ENCODE measurements at regions of chr19 and their contacts with region 1.

Region 1: GRCh38 chr19:55605207-55605636 is 225 bp upstream of the ZNF865 start:
- DNase-seq: peak; percentile 100
- ATAC-seq: peak; percentile 87
- H3K4me3 Mint-ChIP-seq: peak overlapping the region; percentile 88
- H3K27ac Mint-ChIP-seq: peak overlapping the region; percentile 96
- H3K4me1 Mint-ChIP-seq: peaks cover 57% of the 10 kb centered on the region
- H3K27me3 Mint-ChIP-seq: no peaks in the 10 kb centered on the region

Region 2: GRCh38 chr19:55385740-55386529 is 219.3 kb before region 1 on chr19 and contains the start of gene RPL28:
- CTCF ChIA-PET with region 1: no interaction called
- POLR2A ChIA-PET with region 1: no interaction called
- intact Hi-C with region 1: loop called in 1 of 2 experiments (anchors 1 kb)
- DNase-seq: peak; percentile 98
- ATAC-seq: peak; percentile 85
- H3K4me3 Mint-ChIP-seq: peak within 1 kb of the TSS; percentile 89
- H3K27ac Mint-ChIP-seq: peak within 1 kb of the TSS; percentile 98
- H3K4me1 Mint-ChIP-seq: peaks cover 51% of the 10 kb centered on the region
- H3K27me3 Mint-ChIP-seq: no peaks in the 10 kb centered on the region
- total RNA-seq, gene RPL28: 2,751 to 4,078 TPM

Region 3: GRCh38 chr19:55516878-55517620 is 88.2 kb before region 1 on chr19:
- CTCF ChIA-PET with region 1: interaction called, 13 read pairs
- POLR2A ChIA-PET with region 1: no interaction called
- intact Hi-C with region 1: loop called (anchors 1 kb)
- DNase-seq: peak; percentile 96
- ATAC-seq: peak; percentile 100
- H3K4me3 Mint-ChIP-seq: peak overlapping the region; percentile 54
- H3K27ac Mint-ChIP-seq: peak overlapping the region; percentile 9
- H3K4me1 Mint-ChIP-seq: peaks cover 3% of the 10 kb centered on the region
- H3K27me3 Mint-ChIP-seq: no peaks in the 10 kb centered on the region

Region 4: GRCh38 chr19:55586976-55587668 is 18.1 kb before region 1 on chr19:
- CTCF ChIA-PET with region 1: interaction called, 6 read pairs
- POLR2A ChIA-PET with region 1: no interaction called
- intact Hi-C with region 1: loop called in 1 of 2 experiments (anchors 1 kb)
- DNase-seq: peak; percentile 97
- ATAC-seq: peak; percentile 99
- H3K4me3 Mint-ChIP-seq: peak overlapping the region; percentile 71
- H3K27ac Mint-ChIP-seq: peak overlapping the region; percentile 37
- H3K4me1 Mint-ChIP-seq: peaks cover 20% of the 10 kb centered on the region
- H3K27me3 Mint-ChIP-seq: no peaks in the 10 kb centered on the region

Region 5: DNA sequence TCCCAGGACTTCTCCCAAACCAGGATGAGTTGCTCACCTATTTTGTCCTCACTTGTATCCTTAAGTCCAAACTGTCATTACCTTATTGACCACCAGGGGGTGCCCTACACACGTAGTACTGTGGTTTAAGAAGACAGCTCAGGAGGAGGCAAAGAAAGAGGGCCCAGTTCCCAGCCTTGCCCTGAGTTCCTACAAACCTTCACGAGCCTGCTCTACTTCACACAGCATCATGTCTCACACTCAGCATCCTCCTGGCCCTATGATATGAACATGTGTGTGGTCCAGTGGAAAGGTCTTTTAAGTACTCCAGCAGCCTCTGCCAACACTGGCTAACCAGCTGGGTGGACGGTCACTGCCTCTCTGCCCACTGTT is 27.2 kb after region 1 on chr19:
- CTCF ChIA-PET with region 1: interaction called, 33 read pairs
- POLR2A ChIA-PET with region 1: no interaction called
- intact Hi-C with region 1: no loop called
- DNase-seq: peak; percentile 93
- ATAC-seq: peak; percentile 43
- H3K4me3 Mint-ChIP-seq: peak overlapping the region; percentile 30
- H3K27ac Mint-ChIP-seq: peak overlapping the region; percentile 37
- H3K4me1 Mint-ChIP-seq: peaks cover 37% of the 10 kb centered on the region
- H3K27me3 Mint-ChIP-seq: no peaks in the 10 kb centered on the region

Region 6: GRCh38 chr19:55653758-55654539 is 48.7 kb after region 1 on chr19:
- CTCF ChIA-PET with region 1: interaction called, 5 read pairs
- POLR2A ChIA-PET with region 1: interaction called, 3 read pairs
- intact Hi-C with region 1: loop called in 1 of 2 experiments (anchors 1 kb)
- DNase-seq: peak; percentile 99
- ATAC-seq: peak; percentile 84
- H3K4me3 Mint-ChIP-seq: peak overlapping the region; percentile 86
- H3K27ac Mint-ChIP-seq: peak overlapping the region; percentile 98
- H3K4me1 Mint-ChIP-seq: peaks cover 37% of the 10 kb centered on the region
- H3K27me3 Mint-ChIP-seq: no peaks in the 10 kb centered on the region

Measured in activated CD4-positive, alpha-beta T cell treated with anti-CD3 and anti-CD28 coated beads for 36 hours (primary cell).